A673 (cell line): ENCODE measurements at regions of chr2 and their contacts with region 1.

Region 1: DNA sequence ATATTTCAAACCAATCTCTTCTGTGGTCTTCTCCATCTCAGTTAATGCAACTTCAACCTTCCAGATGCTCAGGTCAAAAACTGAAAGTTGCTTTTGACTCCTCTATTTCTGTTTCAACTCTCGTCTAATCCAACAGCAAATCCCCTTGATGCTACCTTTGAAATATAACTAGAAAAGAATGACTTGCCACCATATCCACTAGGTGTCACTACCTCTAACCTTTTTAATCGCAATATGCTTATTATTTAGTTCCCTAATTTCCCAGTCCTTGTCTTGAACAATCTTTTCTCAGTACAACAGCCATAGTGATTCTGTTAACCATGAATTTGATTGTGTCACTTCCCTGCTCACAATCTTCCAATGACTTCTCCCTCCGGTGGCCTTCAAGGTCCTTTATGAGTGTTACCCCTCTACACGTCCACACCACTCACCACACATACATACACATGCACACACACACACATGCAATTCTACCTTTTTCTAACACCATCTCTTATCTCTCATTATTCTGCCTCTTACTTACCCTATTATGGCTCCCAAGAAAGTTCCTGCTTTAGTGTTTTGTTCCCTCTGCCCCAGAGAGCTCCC is 245.5 kb upstream of the KCNJ3 start:
- DNase-seq: peak; percentile 57
- H3K4me3 ChIP-seq: no peak overlapping the region
- H3K27ac ChIP-seq: no peak overlapping the region
- H3K4me1 ChIP-seq: no peaks in the 10 kb centered on the region
- H3K27me3 ChIP-seq: no peaks in the 10 kb centered on the region
- CTCF ChIP-seq: peak; percentile 64

Region 2: GRCh38 chr2:154507186-154507585 is 54.2 kb after region 1 on chr2:
- CTCF ChIA-PET with region 1: no interaction called
- POLR2A ChIA-PET with region 1: no interaction called
- intact Hi-C with region 1: no loop called
- DNase-seq: no peak
- H3K4me3 ChIP-seq: no peak overlapping the region
- H3K27ac ChIP-seq: no peak overlapping the region
- H3K4me1 ChIP-seq: no peaks in the 10 kb centered on the region
- H3K27me3 ChIP-seq: no peaks in the 10 kb centered on the region
- CTCF ChIP-seq: no peak; the same call in 1 of the 2 replicates

Region 3: DNA sequence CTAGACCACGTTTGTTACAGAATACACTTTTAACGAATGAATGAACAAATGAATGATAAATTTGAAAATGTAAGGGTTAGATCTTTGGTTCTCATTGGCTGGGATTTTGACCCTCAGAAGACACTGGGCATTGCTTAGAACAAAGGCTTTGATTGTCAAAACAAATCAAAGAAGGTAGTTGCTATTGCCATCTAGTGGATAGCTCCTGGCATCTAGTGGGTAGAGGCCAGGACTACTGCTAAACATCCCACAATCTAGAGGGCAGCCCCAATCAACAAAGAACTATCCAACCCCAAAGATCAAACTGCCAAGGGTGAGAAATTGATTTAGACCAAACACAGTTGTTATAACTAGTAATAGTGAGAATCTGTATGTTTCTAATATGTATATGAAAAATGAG is 797.8 kb after region 1 on chr2:
- CTCF ChIA-PET with region 1: no interaction called
- POLR2A ChIA-PET with region 1: no interaction called
- intact Hi-C with region 1: loop called (anchors 10 kb)
- DNase-seq: peak; percentile 25
- H3K4me3 ChIP-seq: no peak overlapping the region
- H3K27ac ChIP-seq: no peak overlapping the region
- H3K4me1 ChIP-seq: no peaks in the 10 kb centered on the region
- H3K27me3 ChIP-seq: no peaks in the 10 kb centered on the region
- CTCF ChIP-seq: peak; percentile 51